ENCODE measurements at regions of chr1 and their contacts with region 1.

Region 1: DNA sequence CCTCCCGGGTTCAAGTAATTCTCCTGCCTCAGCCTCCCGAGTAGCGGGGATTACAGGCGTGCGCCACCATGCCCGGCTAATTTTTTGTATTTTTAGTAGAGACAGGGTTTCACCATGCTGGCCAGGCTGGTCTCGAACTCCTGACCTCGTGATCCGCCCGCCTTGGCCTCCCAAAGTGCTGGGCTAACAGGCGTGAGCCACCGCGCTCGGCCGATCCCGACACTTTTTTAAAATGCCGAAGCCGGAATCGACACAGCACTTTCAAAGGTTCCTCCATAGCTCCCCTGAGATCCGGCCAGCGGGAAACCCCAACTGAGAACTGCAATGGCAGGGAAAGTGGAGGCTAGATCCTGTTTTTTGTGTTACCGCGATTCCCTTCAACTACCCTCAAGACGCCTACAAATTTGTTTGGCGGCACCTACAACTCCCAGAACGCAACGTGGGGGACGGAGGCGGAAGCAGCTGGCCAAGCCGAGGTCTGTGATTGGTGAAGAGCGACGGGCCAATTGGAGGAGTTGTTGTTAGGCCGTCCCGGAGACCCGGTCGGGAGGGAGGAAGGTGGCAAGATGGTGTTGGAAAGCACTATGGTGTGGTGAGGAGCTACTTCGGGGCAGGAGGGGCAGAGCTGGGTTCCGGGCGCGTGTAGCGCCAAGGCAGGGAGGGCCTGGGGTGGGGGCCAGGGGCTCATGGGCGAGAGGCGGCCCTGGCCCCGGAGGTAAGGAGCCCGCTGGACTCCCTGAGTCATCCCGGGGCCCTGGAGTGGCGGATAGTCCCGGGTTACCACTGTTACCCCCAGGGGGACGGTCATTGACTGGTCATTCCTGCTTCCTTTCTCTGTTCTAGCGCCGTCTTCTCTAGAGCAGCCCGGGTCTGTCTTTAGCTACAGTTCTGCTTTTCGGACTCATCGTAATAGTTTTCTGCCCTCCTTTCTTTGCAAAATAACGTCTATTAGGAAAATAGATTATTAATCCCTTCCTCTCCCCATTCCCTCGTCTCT is at the start of gene PSMD4:
- DNase-seq: peak; percentile 92
- H3K4me3 Mint-ChIP-seq: peak within 1 kb of the TSS; percentile 98
- H3K27ac Mint-ChIP-seq: peak within 1 kb of the TSS; percentile 92
- H3K4me1 Mint-ChIP-seq: peaks cover 17% of the 10 kb centered on the region
- H3K27me3 Mint-ChIP-seq: no peaks in the 10 kb centered on the region
- total RNA-seq, gene PSMD4: 271 and 280 TPM in 2 replicates

Region 2: GRCh38 chr1:151070474-151071276 is 183.8 kb before region 1 on chr1 and contains the start of gene GABPB2:
- intact Hi-C with region 1: loop called (anchors 10 kb)
- DNase-seq: peak; percentile 82
- H3K4me3 Mint-ChIP-seq: peak within 1 kb of the TSS; percentile 100
- H3K27ac Mint-ChIP-seq: peak within 1 kb of the TSS; percentile 100
- H3K4me1 Mint-ChIP-seq: peaks cover 12% of the 10 kb centered on the region
- H3K27me3 Mint-ChIP-seq: no peaks in the 10 kb centered on the region
- total RNA-seq, gene GABPB2: 14.4 and 15.9 TPM in 2 replicates

Region 3: GRCh38 chr1:151189638-151190445 is 64.7 kb before region 1 on chr1 and contains the start of gene VPS72:
- intact Hi-C with region 1: loop called (anchors 1 kb)
- DNase-seq: peak; percentile 85
- H3K4me3 Mint-ChIP-seq: peak within 1 kb of the TSS; percentile 93
- H3K27ac Mint-ChIP-seq: peak within 1 kb of the TSS; percentile 94
- H3K4me1 Mint-ChIP-seq: peaks cover 17% of the 10 kb centered on the region
- H3K27me3 Mint-ChIP-seq: peaks cover 3% of the 10 kb centered on the region
- total RNA-seq, gene VPS72: 80.7 and 84.5 TPM in 2 replicates

Region 4: DNA sequence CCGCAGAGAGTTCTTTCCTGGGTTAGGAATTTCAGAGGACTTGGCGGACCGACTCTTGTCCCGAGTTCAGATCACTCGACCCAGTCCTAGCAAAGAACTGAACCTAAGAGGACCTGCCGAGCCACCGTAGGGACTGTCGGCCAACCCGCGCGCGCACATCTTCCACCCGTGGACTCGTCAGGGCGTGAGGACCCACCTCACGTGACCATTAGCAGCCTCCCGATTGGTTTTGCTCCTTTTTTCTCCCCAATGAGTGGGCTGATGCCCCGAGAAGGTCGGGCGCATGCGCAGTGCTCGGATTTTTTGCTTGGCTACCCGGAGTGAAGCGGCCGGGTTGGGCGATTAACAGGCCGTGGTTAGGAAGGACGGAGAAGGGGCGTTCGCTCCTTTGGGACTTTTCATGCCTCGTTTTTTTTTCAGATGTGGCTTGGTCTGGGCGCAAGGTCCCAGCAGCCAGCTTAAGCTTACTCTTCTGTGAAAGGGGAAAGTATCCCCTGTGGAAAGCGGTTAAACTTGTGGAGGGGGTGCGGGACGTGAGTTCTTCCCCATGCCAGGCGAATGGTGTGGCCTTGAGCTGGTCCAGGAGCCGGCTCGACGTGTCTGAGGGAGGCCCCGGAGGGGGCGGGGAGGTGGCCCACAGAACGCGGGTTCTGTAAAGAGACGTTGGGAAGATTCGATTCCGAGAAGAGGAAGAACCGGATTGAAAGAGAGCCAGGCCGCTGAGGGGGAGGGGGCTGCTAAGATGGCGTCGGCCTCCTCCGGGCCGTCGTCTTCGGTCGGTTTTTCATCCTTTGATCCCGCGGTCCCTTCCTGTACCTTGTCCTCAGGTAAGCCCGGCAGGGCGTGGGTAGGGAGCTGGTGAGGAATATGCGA is 56.0 kb before region 1 on chr1 and contains the start of gene PIP5K1A:
- intact Hi-C with region 1: loop called (anchors 1 kb)
- DNase-seq: peak; percentile 97
- H3K4me3 Mint-ChIP-seq: peak within 1 kb of the TSS; percentile 99
- H3K27ac Mint-ChIP-seq: peak within 1 kb of the TSS; percentile 93
- H3K4me1 Mint-ChIP-seq: peaks cover 28% of the 10 kb centered on the region
- H3K27me3 Mint-ChIP-seq: peaks cover 3% of the 10 kb centered on the region
- total RNA-seq, gene PIP5K1A: 82.2 and 83.9 TPM in 2 replicates